Colonic mucosa (tissue), 4 donors: ENCODE measurements at regions of chr15 and their contacts with region 1.

Region 1: GRCh38 chr15:65038838-65039237 is 6.3 kb upstream of the SLC51B start:
- DNase-seq: no peak
- H3K4me3 ChIP-seq: no peak overlapping the region
- H3K27ac ChIP-seq: no peak overlapping the region
- H3K4me1 ChIP-seq: peaks cover 9% of the 10 kb centered on the region
- H3K27me3 ChIP-seq: no peaks in the 10 kb centered on the region
- CTCF ChIP-seq: no peak

Region 2: DNA sequence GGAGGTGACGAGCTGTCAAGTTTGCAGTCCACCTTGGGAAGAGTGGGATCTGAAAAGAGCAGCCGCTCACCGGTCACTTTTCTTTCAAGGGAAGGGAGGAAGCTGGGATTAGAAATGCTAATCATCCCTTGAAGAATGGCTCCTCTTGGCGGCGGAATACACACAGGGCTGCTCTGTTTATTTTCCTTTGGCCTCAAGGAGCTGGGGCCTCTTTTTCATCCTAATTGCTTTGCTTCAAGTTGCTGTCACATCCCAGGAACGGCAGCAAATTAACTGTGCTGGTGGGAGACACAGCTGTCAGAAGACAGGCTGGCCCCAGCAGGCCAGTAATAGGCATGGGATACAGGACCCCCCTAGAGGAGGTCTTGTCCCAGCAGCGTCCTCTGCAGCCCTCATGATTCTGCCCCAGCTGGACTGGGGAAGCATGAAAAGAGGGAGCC is 44.4 kb after region 1 on chr15:
- intact Hi-C with region 1: loop called (anchors 5 kb)
- DNase-seq: no peak
- H3K4me3 ChIP-seq: no peak overlapping the region
- H3K27ac ChIP-seq: no peak overlapping the region
- H3K4me1 ChIP-seq: peaks cover 15% of the 10 kb centered on the region
- H3K27me3 ChIP-seq: no peaks in the 10 kb centered on the region
- CTCF ChIP-seq: no peak